ENCODE measurements at regions of chr1 and their contacts with region 1.

Region 1: GRCh38 chr1:71285529-71285928 is 204.7 kb upstream of the ZRANB2 start:
- DNase-seq: no peak
- H3K4me3 Mint-ChIP-seq: no peak overlapping the region
- H3K27ac Mint-ChIP-seq: no peak overlapping the region
- H3K4me1 Mint-ChIP-seq: no peaks in the 10 kb centered on the region
- H3K27me3 Mint-ChIP-seq: no peaks in the 10 kb centered on the region
- CTCF ChIP-seq: no peak

Region 2: DNA sequence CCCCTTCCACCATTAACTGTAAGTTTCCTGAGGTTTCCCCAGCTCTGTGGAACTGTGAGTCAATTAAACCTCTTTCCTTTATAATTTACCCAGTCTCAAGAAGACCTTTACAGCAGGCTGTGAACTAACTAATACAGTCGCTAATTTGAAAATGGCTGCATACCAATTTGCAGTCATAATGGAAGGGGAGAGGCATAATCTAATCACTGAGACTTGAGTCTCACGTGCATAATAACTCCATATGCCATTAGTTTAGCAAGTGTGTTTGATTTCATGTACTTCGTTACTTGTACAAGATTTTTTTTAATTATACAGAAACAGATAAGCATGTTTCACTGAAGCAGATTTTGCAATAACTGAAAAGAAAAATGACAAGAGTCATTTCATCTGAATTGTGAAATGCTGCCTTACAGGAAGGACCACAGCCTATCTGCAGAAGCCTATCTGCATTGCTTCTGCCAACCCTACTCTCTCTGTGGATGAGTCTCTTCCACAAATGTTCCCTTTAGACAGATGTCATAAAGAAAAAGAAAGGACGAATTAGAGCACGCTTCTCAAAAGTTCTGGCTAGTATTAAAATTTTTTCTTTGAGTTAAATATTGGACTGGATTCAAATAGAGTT is 337.0 kb before region 1 on chr1:
- CTCF ChIA-PET with region 1: no interaction called
- intact Hi-C with region 1: no loop called
- DNase-seq: no peak
- H3K4me3 Mint-ChIP-seq: no peak overlapping the region
- H3K27ac Mint-ChIP-seq: no peak overlapping the region
- H3K4me1 Mint-ChIP-seq: no peaks in the 10 kb centered on the region
- H3K27me3 Mint-ChIP-seq: no peaks in the 10 kb centered on the region
- CTCF ChIP-seq: no peak

Region 3: DNA sequence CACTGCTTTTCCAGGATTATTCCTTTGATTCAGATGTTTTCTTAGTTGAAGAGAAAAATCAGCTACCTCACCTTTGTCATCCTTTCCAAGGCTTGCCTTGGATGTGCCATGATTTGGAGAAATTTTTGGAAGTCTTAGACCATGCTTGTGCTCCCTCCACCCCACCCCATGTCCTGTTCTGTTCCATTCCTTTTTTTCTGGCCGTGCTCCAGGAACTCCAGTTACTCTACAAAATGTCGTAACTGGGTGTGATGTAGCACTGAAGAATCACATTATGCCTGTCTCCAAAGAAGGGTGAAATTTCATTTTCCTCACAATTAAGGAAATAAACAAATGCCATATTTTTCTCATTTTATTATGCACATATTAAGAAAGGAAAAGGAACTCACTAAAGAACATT is 13.1 kb after region 1 on chr1:
- CTCF ChIA-PET with region 1: no interaction called
- intact Hi-C with region 1: loop called (anchors 1 kb)
- DNase-seq: no peak
- H3K4me3 Mint-ChIP-seq: no peak overlapping the region
- H3K27ac Mint-ChIP-seq: no peak overlapping the region
- H3K4me1 Mint-ChIP-seq: no peaks in the 10 kb centered on the region
- H3K27me3 Mint-ChIP-seq: no peaks in the 10 kb centered on the region
- CTCF ChIP-seq: no peak